Spleen (tissue), 13 donors: ENCODE measurements at regions of chr4 and their contacts with region 1.

Region 1: DNA sequence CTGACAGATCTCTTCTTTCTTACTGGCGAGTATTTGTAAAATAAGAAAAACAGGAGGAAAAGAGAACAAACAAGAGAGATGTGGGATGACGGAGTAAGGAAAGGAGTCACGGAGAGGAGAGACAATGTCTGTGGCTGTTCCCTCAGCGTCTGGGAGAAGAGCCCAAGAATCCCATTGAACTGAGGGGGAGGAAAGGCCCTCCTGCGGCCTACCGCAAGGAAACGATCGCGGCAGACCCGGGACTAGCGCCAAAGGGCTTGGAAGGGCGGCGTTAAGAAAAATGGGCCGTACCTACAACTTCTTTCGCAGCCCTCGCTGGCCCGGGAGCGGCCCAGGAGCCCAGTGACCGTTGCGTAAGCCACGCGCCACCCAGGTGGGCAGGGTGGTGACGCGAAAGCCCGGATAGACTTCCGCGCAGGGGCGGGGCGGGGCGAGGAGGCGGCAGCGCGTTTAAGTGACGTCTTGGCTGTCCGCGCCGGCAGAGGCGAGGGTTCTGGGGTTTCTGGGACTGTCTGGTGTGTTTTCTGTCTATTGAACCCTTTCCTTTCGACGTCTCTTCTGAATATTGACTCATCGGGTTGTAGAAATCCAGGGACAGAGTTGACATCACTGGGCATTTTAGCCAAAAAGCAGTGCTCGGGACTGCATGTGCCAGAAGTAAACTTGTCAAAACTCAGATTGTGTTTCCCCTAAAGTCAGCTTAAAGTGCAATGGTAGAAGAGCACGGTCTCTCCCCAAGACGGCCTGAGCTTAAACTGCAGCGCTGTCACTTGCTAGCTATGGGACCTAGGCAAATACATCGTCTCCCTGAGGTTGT is at the start of gene SLC9B1:
- DNase-seq: peak; percentile 98
- H3K4me3 ChIP-seq: peak within 1 kb of the TSS; percentile 32 to 71 (median 46)
- H3K27ac ChIP-seq: peak within 1 kb of the TSS; percentile 81 to 94 (median 88)
- H3K4me1 ChIP-seq: peaks cover 3 to 24% (median 19%) of the 10 kb centered on the region in 6 donors
- H3K27me3 ChIP-seq: no peaks in the 10 kb centered on the region
- CTCF ChIP-seq: peak in 2 of 11 experiments; percentile 14 to 20
- POLR2A ChIP-seq: peak in 2 of 3 donors; percentile 25 to 76
- total RNA-seq, gene SLC9B1: 0.79 to 5.4 (median 2.2) TPM

Region 2: GRCh38 chr4:103099691-103100392 is 80.3 kb after region 1 on chr4 and contains the start of gene BDH2:
- intact Hi-C with region 1: loop called (anchors 10 kb)
- DNase-seq: no peak
- H3K4me3 ChIP-seq: peak within 1 kb of the TSS; percentile 24 to 67 (median 43)
- H3K27ac ChIP-seq: peak within 1 kb of the TSS; percentile 56 to 76 (median 62)
- H3K4me1 ChIP-seq: peaks cover 5 to 32% (median 18%) of the 10 kb centered on the region in 6 donors
- H3K27me3 ChIP-seq: no peaks in the 10 kb centered on the region
- CTCF ChIP-seq: peak; percentile 65 to 89 (median 81)
- POLR2A ChIP-seq: no peak
- total RNA-seq, gene BDH2: 16.8 to 42.0 (median 36.8) TPM

Region 3: GRCh38 chr4:103198111-103198765 is 178.7 kb after region 1 on chr4 and contains the start of gene CENPE:
- intact Hi-C with region 1: no loop called
- DNase-seq: peak; percentile 94
- H3K4me3 ChIP-seq: peak within 1 kb of the TSS; percentile 69 to 95 (median 78)
- H3K27ac ChIP-seq: peak within 1 kb of the TSS; percentile 22 to 87 (median 64)
- H3K4me1 ChIP-seq: peaks cover 4 to 23% (median 17%) of the 10 kb centered on the region in 6 donors
- H3K27me3 ChIP-seq: peaks cover 0 to 7% (median 0%) of the 10 kb centered on the region in 7 donors
- CTCF ChIP-seq: no peak
- POLR2A ChIP-seq: no peak
- total RNA-seq, gene CENPE: 3.3 to 11.7 (median 4.4) TPM